HEK293 (cell line): ENCODE measurements at regions of chr9 and their contacts with region 1.

Region 1: DNA sequence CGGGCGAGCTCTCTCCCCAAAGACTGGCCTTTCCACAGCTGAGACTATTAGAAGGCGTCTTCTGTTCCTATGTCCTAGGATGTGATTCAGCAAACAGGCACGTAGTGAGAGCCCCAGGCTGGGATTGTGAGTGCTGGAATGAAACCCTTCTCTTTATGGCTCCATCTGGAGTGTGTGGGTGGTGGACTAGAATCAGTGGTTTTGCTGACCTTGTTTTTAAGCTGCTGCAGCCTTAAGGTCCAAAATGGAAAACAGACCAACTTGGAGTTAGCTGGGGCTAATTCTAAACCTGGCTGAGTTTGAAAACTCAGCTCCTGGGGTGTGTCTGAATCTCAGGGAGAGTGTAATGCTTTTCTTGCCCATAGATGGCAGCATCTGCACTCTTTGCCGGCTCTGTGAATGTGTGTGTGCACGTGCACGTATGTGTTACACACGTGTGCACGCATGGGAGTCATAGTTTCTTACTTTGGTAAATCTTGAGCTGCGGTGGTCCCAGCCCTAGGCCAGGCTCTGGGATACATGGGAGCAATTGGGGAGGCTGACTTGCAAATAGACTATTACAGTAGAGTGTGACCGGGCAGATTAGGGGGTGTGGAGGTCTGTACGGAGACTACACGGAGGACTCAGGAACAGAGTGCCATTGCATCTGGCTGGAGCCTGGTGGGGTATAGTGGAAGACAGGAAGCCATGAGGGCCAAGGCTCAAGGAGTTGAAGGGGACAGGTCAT is 10.7 kb downstream of the GSN start:
- H3K4me3 ChIP-seq: no peak overlapping the region
- H3K27ac ChIP-seq: no peak overlapping the region
- H3K4me1 ChIP-seq: peaks cover 3% of the 10 kb centered on the region; the same call in 1 of the 2 replicates
- CTCF ChIP-seq: peak; percentile 56

Region 2: GRCh38 chr9:121213136-121213806 is 65.4 kb before region 1 on chr9:
- CTCF ChIA-PET with region 1: interaction called, 39 read pairs
- POLR2A ChIA-PET with region 1: interaction called, 3 read pairs
- H3K4me3 ChIP-seq: no peak overlapping the region
- H3K27ac ChIP-seq: no peak overlapping the region
- H3K4me1 ChIP-seq: no peaks in the 10 kb centered on the region
- CTCF ChIP-seq: peak; percentile 44; the same call in 1 of the 2 replicates

Region 3: DNA sequence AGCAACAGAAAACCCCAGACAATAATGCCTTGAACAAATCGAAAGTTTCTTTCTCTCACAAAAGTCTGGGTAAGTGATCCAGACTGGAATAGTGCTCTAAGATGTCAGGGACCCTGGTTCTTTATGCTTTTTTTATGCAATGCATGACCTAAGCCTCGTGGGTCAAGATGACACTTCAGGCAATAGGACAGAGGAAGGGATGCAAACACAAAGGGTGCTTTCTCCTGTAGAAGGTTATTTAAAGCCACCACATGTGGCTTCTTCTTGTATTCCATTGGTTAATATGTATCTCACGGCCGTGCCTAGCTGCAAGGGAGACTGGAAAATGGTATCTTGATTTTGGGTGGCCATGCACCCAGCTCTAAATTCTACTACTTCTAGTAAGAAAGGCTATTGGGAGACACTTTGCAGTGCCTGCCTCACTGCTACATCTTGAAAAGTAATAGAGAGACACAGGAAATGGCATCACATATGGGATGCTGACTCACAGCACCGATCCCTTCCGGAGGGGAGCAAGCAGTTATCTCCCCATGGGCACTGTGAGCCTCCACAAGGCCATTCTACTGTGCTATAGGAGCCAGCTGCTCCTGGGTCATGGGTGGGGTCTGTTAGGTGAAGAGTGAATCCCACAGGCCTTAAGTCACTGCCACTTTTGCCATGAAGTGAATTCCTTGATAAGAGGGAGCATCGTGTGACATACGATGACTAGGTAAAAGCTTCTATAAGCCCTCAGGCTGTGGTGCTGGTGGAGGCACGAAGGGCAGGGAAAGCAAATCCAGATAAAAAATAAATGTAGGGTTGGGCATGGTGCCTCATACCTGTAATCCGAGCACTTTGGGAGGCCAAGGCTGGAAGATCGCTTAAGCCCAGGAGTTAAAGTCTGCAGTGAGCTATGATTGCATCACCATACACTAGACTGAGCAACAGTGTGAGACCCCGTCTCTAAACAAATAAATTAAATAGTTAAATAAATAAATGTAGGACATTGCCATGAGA is 44.5 kb before region 1 on chr9:
- CTCF ChIA-PET with region 1: interaction called, 22 read pairs
- POLR2A ChIA-PET with region 1: no interaction called
- H3K4me3 ChIP-seq: no peak overlapping the region
- H3K27ac ChIP-seq: no peak overlapping the region
- H3K4me1 ChIP-seq: no peaks in the 10 kb centered on the region
- CTCF ChIP-seq: no peak

Region 4: DNA sequence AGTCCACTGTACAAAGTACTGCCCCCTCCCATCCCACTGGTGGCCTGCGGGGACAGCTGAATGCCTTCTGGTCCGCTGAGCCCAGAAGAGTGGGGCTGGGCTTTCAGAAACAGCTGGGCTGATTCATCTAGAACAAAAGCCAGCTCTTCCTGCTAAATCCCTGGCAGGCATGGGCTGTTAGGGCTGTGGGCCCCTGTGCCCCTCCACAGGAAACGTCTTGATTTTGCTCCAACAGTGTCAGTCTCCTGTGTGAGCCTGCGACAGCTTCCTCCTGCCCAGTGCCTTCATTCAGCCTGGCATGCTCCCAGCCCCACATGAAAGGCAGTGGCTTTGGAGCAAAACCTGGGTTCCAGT is 17.6 kb before region 1 on chr9:
- CTCF ChIA-PET with region 1: interaction called, 70 read pairs
- POLR2A ChIA-PET with region 1: no interaction called
- H3K4me3 ChIP-seq: no peak overlapping the region
- H3K27ac ChIP-seq: no peak overlapping the region
- H3K4me1 ChIP-seq: no peaks in the 10 kb centered on the region
- CTCF ChIP-seq: no peak

Region 5: GRCh38 chr9:121299467-121300234 is 21.0 kb after region 1 on chr9:
- CTCF ChIA-PET with region 1: interaction called, 15 read pairs
- POLR2A ChIA-PET with region 1: no interaction called
- H3K4me3 ChIP-seq: peak overlapping the region; percentile 29
- H3K27ac ChIP-seq: peak overlapping the region; percentile 24; the same call in 1 of the 2 replicates
- H3K4me1 ChIP-seq: 0 out of 2 replicates have a peak, but pooled peaks cover 2% of the 10 kb centered on the region
- CTCF ChIP-seq: no peak

Region 6: DNA sequence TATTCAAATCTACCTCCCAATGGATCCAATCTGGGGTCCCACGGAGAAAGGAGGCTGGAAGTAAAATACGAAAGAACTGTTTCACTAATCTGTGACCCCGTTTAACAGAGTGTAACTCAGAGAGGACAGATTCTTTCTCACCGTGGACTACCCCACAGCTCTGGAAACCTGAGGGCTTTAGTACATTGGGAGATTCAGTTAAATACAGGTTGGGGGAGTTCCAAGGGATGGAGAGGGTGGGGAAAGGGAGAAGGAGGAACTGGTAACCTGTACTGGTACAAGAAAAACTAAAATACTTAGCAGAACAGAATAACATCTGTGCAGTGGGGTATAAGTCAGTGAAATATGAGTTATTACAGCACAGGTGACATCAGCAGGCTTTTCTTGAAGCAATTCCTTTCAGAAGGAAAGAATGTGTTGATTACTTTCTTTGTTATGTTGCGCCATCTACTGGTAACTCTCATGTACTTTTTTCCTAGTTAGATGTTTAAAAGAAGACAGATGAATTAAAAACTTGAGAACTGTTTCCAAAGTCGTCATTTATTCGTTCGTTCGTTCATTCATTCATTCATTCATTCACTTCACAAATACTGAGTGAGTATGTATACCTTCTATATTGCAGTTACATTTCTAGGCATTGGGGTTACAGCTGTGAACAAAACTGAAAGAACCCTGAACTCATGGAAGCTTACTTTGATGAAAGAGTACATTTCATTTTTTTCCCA is 121.3 kb after region 1 on chr9:
- CTCF ChIA-PET with region 1: interaction called, 37 read pairs
- POLR2A ChIA-PET with region 1: no interaction called
- H3K4me3 ChIP-seq: no peak overlapping the region
- H3K27ac ChIP-seq: no peak overlapping the region
- H3K4me1 ChIP-seq: no peaks in the 10 kb centered on the region
- CTCF ChIP-seq: no peak